HEK293 (cell line): ENCODE measurements at regions of chr6 and their contacts with region 1.

Region 1: DNA sequence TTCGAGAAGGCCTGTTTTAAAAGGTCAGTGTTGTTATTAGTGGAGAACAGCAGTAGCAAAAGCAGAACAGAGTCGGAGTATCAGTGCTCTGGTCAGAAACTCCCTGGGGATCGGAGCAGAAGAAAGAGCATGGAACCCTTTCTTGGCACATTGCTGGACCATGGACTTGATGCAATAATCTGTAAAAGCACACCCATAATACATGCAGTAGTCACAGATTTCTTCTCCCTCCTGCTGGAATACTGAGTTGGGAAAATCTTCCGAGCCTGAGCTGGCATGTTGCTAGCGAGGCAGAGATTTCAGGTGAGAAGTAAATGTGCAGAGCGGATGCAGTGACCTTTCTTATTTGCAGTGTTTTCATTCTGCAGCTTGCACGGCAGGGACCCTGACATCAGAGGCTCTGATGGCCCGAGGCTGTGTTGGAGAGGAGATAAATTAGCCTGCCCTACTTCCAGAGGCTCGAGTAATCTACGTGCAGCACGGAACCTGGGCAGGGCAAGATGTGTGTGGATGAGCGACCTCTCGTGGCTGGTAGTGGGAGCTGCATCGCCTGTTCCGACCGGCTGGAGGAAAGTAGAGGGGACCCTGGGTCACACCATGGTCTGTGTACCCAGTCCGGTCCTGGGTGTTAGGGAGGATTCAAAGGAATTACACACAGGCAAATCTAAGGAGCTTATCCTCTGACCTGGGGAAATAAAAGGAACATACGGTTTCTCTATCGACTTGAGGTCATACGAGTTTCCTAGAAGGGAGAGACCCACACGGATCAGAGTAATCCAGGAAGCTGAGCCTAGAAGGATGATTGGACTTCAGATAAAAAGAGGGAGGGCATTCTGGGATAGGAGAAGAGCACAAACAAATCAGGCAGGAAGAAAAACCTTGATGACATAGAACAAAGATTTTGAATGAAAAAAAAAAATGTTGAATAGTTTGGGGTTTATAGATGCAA is 137.0 kb upstream of the STMND1 start:
- H3K4me3 ChIP-seq: no peak overlapping the region
- H3K27ac ChIP-seq: no peak overlapping the region
- H3K4me1 ChIP-seq: no peaks in the 10 kb centered on the region
- CTCF ChIP-seq: peak; percentile 93

Region 2: DNA sequence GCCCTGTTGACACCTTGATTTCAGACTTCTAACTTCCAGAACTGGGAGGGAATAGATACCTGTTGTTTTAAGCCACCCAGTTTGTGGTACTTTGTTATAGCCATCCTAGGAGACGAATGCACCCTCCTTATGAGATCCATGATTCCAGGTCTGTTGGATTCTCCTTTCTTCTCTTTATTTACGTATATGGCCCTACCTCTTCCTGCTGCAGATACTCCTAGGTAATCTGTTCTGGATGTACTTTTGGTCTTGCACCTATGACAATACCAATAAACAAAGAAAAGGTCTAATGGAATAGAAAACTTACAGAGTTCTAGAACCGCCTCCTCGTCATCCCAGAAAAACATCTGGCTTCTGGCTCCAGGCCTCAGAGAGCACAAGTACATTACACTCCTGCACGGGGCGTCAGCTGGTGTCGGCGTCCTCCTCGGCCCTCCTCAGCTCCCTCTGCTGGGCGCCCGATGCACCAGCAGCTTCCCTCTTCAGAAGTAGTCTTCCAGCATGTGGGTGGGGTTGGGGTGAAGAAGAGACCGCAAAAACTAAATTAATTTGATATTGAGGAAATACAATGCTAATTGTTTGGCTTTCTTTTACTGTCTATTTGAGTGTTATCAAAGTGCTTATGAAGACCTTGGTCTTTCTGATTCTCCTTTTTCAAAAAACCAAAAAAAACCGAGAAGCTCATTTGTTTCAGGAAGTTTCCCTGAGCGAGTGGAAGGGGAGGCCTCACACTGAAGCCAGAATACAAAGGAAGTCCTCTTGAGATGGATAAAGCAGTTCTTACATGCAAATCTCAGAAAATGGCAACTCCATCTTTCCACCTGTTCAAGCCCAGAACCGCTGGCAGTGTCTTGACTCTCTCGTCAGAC is 193.9 kb before region 1 on chr6:
- CTCF ChIA-PET with region 1: interaction called, 94 read pairs
- POLR2A ChIA-PET with region 1: no interaction called
- H3K4me3 ChIP-seq: no peak overlapping the region
- H3K27ac ChIP-seq: peak overlapping the region; percentile 12; the same call in 1 of the 2 replicates
- H3K4me1 ChIP-seq: peaks cover 46% of the 10 kb centered on the region
- CTCF ChIP-seq: peak; percentile 72

Region 3: GRCh38 chr6:16846399-16846778 is 118.4 kb before region 1 on chr6:
- CTCF ChIA-PET with region 1: interaction called, 10 read pairs
- POLR2A ChIA-PET with region 1: interaction called, 6 read pairs
- H3K4me3 ChIP-seq: no peak overlapping the region
- H3K27ac ChIP-seq: no peak overlapping the region
- H3K4me1 ChIP-seq: peaks cover 32% of the 10 kb centered on the region
- CTCF ChIP-seq: no peak

Region 4: GRCh38 chr6:16939839-16940238 is 25.0 kb before region 1 on chr6:
- CTCF ChIA-PET with region 1: interaction called, 15 read pairs
- POLR2A ChIA-PET with region 1: no interaction called
- H3K4me3 ChIP-seq: no peak overlapping the region
- H3K27ac ChIP-seq: no peak overlapping the region
- H3K4me1 ChIP-seq: no peaks in the 10 kb centered on the region
- CTCF ChIP-seq: no peak

Region 5: GRCh38 chr6:16947375-16948015 is 17.3 kb before region 1 on chr6:
- CTCF ChIA-PET with region 1: interaction called, 60 read pairs
- POLR2A ChIA-PET with region 1: interaction called, 3 read pairs
- H3K4me3 ChIP-seq: no peak overlapping the region
- H3K27ac ChIP-seq: peak overlapping the region; percentile 10; the same call in 1 of the 2 replicates
- H3K4me1 ChIP-seq: peaks cover 13% of the 10 kb centered on the region
- CTCF ChIP-seq: no peak

Region 6: DNA sequence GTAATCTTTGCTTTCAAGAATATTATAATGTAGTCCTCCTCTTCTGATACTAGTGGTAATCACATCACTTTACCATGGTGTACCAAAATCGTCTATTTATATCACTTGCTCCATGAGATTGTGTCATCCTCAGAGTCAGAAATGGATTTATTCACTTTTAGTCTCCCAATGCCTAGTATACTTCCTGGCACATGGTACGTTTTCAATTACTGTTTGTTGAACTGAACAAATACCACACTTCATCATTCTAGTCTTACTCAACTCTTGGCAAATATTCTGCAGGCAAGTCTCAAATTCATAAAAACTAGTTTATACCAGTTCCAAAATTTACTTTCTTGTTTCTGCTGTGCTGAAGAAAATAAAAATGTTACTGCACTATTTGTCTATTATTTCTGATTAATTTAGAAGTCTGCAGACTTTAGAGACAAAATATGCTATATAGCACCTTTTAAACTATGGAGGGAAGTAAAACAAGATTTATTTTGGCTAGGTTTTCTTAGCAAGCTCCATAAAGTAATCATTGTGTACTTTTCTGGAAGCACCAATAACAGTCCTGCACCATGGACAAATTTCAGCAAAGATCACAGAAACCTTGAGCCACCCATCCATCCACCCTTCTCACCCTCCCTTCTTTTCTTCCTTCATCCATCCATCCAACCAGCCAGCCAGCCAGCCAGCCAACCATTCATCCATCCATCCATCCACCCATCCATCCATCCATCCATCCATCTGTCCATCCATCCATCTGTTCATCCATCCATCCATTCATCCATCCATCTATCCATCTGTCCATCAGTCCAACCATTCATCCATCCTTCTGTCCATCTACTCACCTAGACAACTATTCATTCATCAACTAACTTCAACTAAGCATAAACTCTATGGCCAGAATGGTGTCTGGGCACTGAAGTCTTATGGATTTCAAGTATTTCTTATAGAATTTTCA is 34.9 kb after region 1 on chr6:
- CTCF ChIA-PET with region 1: interaction called, 14 read pairs
- POLR2A ChIA-PET with region 1: no interaction called
- H3K4me3 ChIP-seq: no peak overlapping the region
- H3K27ac ChIP-seq: no peak overlapping the region
- H3K4me1 ChIP-seq: 0 out of 2 replicates have a peak, but pooled peaks cover 3% of the 10 kb centered on the region
- CTCF ChIP-seq: no peak

Region 7: DNA sequence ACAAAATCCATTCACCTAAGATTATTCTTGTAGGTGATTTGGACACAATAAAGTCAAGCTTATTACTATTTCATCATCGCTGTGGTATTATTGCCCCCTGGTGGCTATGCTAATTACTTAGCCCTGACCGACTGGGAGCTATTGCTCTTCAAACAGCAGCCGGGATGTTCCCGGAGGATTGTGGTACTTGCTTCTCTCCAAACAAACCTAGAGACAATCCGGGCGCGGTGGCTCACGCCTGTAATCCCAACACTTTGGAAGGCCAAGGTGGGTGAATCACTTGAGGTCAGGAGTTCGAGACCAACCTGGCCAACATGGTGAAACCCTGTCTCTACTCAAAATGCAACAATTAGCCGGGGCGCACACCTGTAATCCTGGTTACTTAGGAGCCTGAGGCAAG is 121.6 kb after region 1 on chr6:
- CTCF ChIA-PET with region 1: interaction called, 10 read pairs
- POLR2A ChIA-PET with region 1: no interaction called
- H3K4me3 ChIP-seq: no peak overlapping the region
- H3K27ac ChIP-seq: no peak overlapping the region
- H3K4me1 ChIP-seq: no peaks in the 10 kb centered on the region; the same call in 1 of the 2 replicates
- CTCF ChIP-seq: peak; percentile 55; the same call in 1 of the 2 replicates